GM23248 (cell line): ENCODE measurements at regions of chr5 and their contacts with region 1.

Region 1: DNA sequence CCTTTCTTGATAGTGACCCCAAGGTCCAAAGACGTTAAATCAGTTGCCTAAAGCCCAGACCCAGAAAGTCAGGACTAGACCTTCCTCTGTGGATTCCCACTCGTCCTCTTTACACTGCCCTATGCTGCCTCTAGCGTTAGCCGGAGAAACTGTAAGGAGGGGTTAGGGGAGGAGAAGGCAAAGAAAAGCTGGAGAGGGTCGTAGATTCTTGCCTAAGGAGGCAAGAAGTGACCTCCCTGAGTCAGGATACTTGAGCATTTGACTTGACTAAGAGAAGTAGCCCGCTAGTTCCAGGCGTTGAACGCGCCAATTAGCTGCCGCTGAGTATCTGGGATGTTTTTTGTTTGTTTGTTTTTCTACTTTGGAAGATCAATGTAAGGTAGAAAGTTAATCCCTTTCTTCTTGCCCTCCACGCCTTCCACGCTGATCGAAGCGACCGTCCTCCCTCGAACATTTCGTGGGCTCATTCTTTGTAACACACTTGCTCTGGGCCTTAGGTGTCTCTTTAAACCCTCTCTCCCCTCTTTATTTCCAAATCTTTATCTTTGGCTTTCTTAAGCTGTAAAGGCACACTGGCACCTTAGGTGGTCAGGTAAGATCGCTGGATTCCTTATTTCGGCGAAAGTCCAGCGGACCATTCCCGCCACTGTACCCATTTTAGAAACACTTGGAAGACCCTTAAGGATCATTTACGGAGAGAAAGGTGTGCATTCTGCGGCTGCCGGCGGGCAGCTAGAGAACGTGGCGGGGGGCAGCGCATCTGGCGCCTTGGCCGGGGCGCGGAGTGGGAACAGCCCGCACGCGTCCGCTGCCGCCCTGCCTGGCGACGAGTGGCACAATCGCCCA is 5.1 kb upstream of the RGMB start:
- DNase-seq: peak; percentile 76
- H3K4me3 ChIP-seq: peak overlapping the region; percentile 99
- H3K27ac ChIP-seq: peak overlapping the region; percentile 94
- H3K4me1 ChIP-seq: peaks cover 13% of the 10 kb centered on the region
- H3K27me3 ChIP-seq: no peaks in the 10 kb centered on the region

Region 2: DNA sequence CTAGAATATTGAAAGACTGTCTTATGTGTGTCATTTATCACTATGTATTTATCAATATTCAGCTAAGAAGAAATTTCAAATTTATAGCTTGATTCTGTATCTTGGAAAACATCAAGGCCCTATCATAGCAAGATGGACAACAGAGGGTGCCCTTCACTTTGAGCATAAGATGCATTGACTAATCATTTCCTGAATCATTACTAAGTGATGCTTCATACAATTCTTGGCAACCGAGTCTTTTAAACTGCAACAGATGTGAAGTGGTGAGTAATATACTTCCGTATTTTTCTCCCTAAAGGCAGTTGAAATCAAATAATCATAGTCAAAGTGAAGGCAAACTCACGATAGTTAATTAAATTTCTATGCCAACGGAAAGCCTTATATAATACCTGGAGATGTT is 313.5 kb before region 1 on chr5:
- in situ Hi-C with region 1: loop called (anchors 10 kb)
- DNase-seq: peak; percentile 98
- H3K4me3 ChIP-seq: peak overlapping the region; percentile 63
- H3K27ac ChIP-seq: peak overlapping the region; percentile 94
- H3K4me1 ChIP-seq: peaks cover 55% of the 10 kb centered on the region
- H3K27me3 ChIP-seq: no peaks in the 10 kb centered on the region

Region 3: DNA sequence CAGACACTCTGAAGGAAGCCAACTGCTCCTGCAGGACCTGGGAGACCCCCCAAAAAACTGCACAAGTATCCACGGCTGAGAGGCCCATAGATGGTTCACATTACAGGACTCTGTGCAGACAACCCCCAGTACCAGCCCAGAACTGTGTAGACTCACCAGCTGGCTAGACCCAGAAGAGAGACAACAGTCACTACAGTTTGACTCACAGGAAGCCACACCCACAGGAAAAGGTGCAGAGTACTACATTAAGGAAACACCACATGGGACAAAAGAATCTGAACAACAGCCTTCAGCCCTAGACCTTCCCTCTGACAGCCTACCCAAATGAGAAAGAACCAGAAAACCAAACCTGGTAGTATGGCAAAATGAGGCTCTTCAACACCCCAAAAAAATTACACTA is 276.1 kb before region 1 on chr5:
- in situ Hi-C with region 1: no loop called
- DNase-seq: peak; percentile 54
- H3K4me3 ChIP-seq: no peak overlapping the region
- H3K27ac ChIP-seq: no peak overlapping the region
- H3K4me1 ChIP-seq: peaks cover 7% of the 10 kb centered on the region
- H3K27me3 ChIP-seq: no peaks in the 10 kb centered on the region